Vagina (tissue), 2 donors: ENCODE measurements at regions of chr19 and their contacts with region 1.

Region 1: DNA sequence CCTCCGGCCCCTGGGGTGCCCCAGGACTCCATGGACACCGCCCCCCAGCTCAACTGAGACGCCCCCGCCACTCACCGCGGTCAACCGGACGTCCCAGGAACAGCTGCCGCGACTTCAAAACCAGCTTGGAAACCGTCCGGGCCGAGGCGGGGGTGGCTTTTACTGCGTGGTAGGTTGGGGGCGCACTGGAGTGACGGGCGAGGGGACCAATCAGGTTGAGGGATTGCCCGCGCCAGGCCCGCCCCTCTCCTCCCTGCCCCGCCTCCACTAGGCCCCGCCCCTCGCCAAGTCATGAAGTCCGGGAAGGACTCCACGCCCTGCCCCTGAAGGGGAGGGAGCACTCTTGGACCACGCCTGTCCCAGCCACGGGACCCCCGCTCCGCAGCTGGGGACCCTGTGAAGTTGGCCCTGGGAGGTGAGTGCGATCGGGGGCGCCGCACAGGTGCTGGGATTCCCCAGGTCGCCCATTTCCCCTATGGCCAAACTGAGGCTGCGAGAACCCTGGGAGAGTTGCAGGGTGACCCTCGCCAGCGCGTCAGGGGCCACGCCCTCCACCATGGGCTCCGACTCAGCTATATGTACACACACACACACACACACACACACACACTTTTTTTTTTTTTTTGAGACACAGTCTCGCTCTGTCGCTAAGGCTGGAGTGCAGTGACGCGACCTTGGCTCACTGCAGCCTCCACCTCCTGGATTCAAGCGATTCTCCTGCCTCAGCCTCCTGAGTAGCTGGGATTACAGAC is at the start of gene PLIN3:
- DNase-seq: peak in 1 of 2 donors; percentile 97
- H3K4me3 ChIP-seq: peak within 1 kb of the TSS; percentile 86 to 94
- H3K27ac ChIP-seq: peak within 1 kb of the TSS; percentile 91
- H3K4me1 ChIP-seq: peaks cover 22% of the 10 kb centered on the region
- H3K27me3 ChIP-seq: no peaks in the 10 kb centered on the region
- CTCF ChIP-seq: no peak
- POLR2A ChIP-seq: peak in 1 of 2 donors; percentile 63
- total RNA-seq, gene PLIN3: 93.8 TPM

Region 2: DNA sequence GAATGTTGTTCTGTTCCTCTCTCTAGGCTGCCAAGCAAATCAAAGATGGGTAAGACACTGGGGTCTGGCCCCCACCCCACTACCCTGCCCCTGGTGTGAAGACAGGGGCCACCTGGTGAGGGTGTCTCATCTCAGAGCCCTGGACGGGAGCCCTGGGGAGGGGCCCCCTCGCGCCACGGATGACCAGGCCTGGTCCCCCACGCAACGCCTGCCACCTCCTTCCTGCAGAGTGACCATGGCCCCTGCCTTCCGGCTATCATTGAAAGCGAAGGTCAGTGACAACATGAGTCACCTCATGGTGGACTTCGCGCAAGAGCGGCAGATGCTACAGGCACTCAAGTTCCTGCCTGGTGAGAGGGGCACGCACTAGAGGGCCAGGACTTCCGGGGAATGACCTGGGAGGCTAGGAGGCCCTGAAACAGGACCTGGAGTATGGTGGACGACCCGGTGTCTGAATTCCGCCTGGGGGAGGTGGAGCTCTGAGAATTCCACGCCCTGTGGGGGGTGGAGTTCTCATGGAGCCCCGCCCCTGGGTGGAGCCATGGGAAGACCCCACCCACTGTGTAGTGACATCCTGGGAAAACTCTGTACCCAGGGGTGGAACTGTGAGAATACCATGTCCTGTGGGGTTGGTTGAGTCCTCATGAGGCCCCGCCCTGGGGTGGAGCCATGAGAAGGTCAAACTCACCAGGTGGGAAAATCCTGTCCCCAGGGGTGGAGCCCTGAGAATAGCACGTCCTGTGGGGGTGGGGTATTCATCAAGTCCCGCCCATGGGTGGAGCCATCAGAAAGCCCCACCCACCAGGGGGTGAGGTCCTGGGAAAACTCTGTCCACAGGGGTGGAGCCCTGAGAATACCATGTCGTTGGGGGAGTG is 557.2 kb before region 1 on chr19:
- intact Hi-C with region 1: no loop called
- DNase-seq: no peak
- H3K4me3 ChIP-seq: no peak overlapping the region
- H3K27ac ChIP-seq: no peak overlapping the region
- H3K4me1 ChIP-seq: no peaks in the 10 kb centered on the region
- H3K27me3 ChIP-seq: no peaks in the 10 kb centered on the region
- CTCF ChIP-seq: no peak
- POLR2A ChIP-seq: no peak

Region 3: GRCh38 chr19:4817467-4818277 is 50.0 kb before region 1 on chr19:
- intact Hi-C with region 1: loop called (anchors 1 kb)
- DNase-seq: no peak
- H3K4me3 ChIP-seq: no peak overlapping the region
- H3K27ac ChIP-seq: no peak overlapping the region
- H3K4me1 ChIP-seq: peaks cover 17% of the 10 kb centered on the region
- H3K27me3 ChIP-seq: no peaks in the 10 kb centered on the region
- CTCF ChIP-seq: no peak
- POLR2A ChIP-seq: no peak

Region 4: GRCh38 chr19:4909897-4910593 is 42.3 kb after region 1 on chr19:
- intact Hi-C with region 1: loop called (anchors 5 kb)
- DNase-seq: no peak
- H3K4me3 ChIP-seq: peak overlapping the region; percentile 58 to 76
- H3K27ac ChIP-seq: no peak overlapping the region
- H3K4me1 ChIP-seq: peaks cover 42% of the 10 kb centered on the region
- H3K27me3 ChIP-seq: no peaks in the 10 kb centered on the region
- CTCF ChIP-seq: no peak
- POLR2A ChIP-seq: no peak

Region 5: DNA sequence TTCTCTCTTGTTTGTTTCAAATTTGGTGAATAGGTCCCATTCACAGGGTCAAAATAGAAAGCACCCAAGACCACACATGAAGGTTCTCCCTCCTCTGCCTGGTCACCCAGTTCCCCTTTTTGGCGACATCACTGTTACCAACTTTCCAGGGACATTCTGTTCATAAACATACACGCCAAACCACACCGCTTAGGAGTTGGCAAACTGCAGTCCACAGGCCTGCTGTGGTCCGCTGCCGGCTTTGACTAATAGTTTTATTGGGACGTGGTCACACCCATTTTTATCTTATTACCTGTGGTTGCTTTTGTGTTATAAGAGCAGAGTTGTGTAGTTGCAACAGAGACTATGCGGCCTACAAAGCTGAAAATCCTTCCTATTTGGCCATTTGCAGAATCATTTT is 65.8 kb after region 1 on chr19:
- intact Hi-C with region 1: no loop called
- DNase-seq: no peak
- H3K4me3 ChIP-seq: no peak overlapping the region
- H3K27ac ChIP-seq: no peak overlapping the region
- H3K4me1 ChIP-seq: no peaks in the 10 kb centered on the region
- H3K27me3 ChIP-seq: no peaks in the 10 kb centered on the region
- CTCF ChIP-seq: no peak
- POLR2A ChIP-seq: no peak

Region 6: GRCh38 chr19:4976401-4977298 is 108.9 kb after region 1 on chr19:
- intact Hi-C with region 1: loop called (anchors 10 kb)
- DNase-seq: peak in 1 of 2 donors; percentile 98
- H3K4me3 ChIP-seq: peak overlapping the region; percentile 18 to 34
- H3K27ac ChIP-seq: peak overlapping the region; percentile 92
- H3K4me1 ChIP-seq: peaks cover 97% of the 10 kb centered on the region
- H3K27me3 ChIP-seq: no peaks in the 10 kb centered on the region
- CTCF ChIP-seq: peak; percentile 8 to 56 (median 54)
- POLR2A ChIP-seq: peak in 1 of 2 donors; percentile 44